Prostate gland (tissue), 2 donors: ENCODE measurements at regions of chr2 and their contacts with region 1.

Region 1: GRCh38 chr2:21042958-21043743 is 722 bp downstream of the APOB start:
- DNase-seq: peak; percentile 47
- H3K4me3 ChIP-seq: no peak overlapping the region
- H3K27ac ChIP-seq: no peak overlapping the region
- H3K4me1 ChIP-seq: no peaks in the 10 kb centered on the region
- H3K27me3 ChIP-seq: no peaks in the 10 kb centered on the region
- CTCF ChIP-seq: peak; percentile 94 to 97 (median 95)
- POLR2A ChIP-seq: no peak

Region 2: DNA sequence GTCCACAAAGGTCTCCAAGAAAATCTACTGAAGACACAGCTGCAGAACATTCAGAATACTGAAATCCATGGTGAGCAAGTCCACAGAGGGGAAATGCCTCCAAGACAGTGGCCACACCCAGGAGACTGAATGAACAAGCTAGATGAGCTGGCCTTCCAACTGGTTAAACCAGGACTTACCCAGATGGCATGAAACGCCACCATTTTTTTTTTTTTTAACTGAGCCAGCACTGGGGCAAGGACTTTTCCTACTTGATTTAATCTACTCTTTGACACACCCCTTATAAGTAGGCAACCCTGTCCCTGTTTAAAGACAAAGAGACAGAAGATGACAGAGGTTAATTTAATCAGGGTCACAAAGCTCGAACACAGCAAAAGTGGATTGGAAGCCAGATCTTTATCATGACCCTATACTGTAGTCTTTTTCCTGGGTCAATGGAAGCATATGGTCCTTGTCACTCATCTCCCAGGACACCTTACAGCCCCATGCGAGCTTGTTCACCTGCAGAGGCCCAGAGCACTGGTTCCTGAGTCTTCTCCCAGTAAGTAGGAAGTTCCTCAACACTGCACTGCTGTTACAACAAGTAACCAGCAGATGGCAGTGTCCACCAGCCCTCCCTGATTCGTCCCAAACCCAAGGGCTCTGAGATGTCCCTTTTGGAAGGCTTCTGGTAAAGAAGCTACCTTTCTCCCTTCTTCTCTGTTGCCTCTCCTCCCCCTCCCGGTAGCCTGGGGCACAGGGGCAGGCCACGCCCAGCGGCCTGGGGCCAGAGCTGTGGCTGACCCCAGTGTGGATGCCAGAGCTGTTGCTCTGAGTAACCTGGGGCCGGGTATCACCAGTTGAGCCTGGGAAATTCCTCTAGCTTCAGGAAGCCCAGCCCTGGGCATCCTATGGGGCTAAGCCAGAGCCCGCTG is 381.8 kb before region 1 on chr2:
- intact Hi-C with region 1: loop called (anchors 2 kb)
- DNase-seq: peak; percentile 47
- H3K4me3 ChIP-seq: no peak overlapping the region
- H3K27ac ChIP-seq: no peak overlapping the region
- H3K4me1 ChIP-seq: peaks cover 4% of the 10 kb centered on the region
- H3K27me3 ChIP-seq: peaks cover 2% of the 10 kb centered on the region
- CTCF ChIP-seq: peak; percentile 94 to 98 (median 96)
- POLR2A ChIP-seq: no peak

Region 3: DNA sequence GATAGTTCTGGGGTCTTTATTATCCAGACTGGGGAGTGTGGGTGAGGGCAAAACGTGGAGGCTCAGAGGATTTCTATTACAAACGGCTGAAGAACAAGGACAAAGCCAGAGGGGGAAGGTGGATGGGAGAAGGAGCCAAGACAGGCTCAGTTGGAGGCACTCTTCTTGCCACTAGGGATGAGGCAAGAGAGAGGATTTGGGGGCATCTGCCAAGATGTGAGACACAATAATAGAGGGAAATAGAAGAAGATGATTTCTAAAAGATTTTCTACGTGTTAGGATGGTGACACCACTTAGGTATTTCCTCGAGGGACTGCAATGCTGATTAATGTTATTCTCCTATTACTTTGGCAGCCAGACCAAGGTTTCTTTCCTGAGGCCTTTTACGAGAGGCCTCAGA is 71.0 kb before region 1 on chr2:
- intact Hi-C with region 1: loop called (anchors 2 kb)
- DNase-seq: no peak
- H3K4me3 ChIP-seq: no peak overlapping the region
- H3K27ac ChIP-seq: peak overlapping the region; percentile 15 to 31
- H3K4me1 ChIP-seq: no peaks in the 10 kb centered on the region
- H3K27me3 ChIP-seq: no peaks in the 10 kb centered on the region
- CTCF ChIP-seq: no peak
- POLR2A ChIP-seq: no peak

Region 4: GRCh38 chr2:20992201-20992711 is 50.9 kb before region 1 on chr2:
- intact Hi-C with region 1: loop called (anchors 5 kb)
- DNase-seq: peak; percentile 17
- H3K4me3 ChIP-seq: no peak overlapping the region
- H3K27ac ChIP-seq: peak overlapping the region; percentile 42 to 61
- H3K4me1 ChIP-seq: no peaks in the 10 kb centered on the region
- H3K27me3 ChIP-seq: no peaks in the 10 kb centered on the region
- CTCF ChIP-seq: no peak
- POLR2A ChIP-seq: no peak

Region 5: DNA sequence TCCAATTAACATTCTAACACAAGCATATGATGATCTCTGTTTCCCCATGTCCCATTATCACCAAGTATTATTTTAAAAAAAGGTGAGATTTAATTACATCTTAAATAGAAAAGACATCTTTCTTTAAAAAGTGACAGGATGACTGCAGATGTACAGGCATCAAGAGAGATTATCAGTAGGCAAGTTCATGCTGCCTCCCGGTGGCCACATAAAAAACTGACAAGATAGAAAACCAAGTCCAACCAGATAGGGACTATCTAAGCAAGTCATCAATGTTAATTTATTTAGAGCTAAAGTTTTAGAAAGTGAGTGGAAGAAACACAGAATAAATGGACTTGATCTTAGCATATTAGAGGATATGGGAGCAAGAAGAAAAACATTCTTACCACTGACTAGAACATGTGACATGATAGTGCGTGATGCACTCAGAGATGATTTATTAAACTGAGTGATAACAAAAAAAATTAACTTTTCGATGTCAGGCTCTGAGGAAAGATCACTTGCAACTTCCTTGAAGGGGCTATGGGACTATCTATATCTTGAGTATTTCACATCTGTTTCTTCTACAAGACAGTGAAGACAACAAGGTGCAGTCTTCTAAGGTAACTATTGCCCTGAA is 75.3 kb after region 1 on chr2:
- intact Hi-C with region 1: loop called (anchors 1 kb)
- DNase-seq: no peak
- H3K4me3 ChIP-seq: no peak overlapping the region
- H3K27ac ChIP-seq: no peak overlapping the region
- H3K4me1 ChIP-seq: no peaks in the 10 kb centered on the region
- H3K27me3 ChIP-seq: no peaks in the 10 kb centered on the region
- CTCF ChIP-seq: peak in 3 of 4 experiments; percentile 42 to 66 (median 55)
- POLR2A ChIP-seq: no peak

Region 6: DNA sequence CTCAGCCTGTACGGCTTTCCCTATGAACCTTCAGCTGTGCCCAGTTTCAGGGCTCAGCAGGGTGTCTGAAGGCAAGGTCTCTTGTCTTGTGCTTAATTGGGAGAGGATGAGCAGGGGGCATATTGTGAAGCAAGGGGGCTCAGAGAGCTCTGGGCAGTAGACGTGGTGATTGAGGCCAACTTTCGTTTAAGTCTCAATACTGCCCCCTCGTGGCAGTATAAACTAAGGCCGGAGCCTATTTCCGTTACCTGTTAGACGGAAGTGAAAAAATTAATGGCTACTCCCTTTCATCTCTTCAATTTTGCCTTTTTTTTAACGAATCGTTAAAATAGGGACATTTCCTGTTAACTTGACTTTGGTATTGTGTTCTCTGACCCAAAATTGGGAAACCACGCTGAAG is 274.0 kb after region 1 on chr2:
- intact Hi-C with region 1: loop called (anchors 5 kb)
- DNase-seq: no peak
- H3K4me3 ChIP-seq: no peak overlapping the region
- H3K27ac ChIP-seq: no peak overlapping the region
- H3K4me1 ChIP-seq: no peaks in the 10 kb centered on the region
- H3K27me3 ChIP-seq: no peaks in the 10 kb centered on the region
- CTCF ChIP-seq: peak in 3 of 4 experiments; percentile 31 to 58 (median 40)
- POLR2A ChIP-seq: no peak